ENCODE measurements at regions of chr4 and their contacts with region 1.

Region 1: DNA sequence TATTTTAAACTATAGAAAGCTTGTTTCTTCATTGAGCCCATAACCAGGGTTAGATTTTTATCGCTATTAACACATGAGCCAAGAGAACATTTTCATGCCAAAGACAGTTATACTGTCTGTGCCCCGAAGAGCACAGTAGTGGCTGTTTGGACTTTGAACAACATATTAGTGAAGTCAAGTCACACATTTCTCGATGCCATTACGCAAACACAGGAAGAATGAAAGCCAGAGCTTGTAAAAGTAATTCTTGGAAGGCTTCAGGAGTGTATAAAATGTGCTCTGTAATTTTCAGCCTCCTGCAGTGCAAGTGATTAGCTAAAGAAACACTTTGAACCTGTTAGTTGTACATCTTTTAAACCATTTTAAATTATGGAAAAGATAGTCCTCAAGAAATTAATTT is 590.7 kb upstream of the PITX2 start:
- DNase-seq: no peak
- H3K4me3 ChIP-seq: no peak overlapping the region
- H3K27ac ChIP-seq: no peak overlapping the region
- H3K4me1 ChIP-seq: no peaks in the 10 kb centered on the region
- H3K27me3 ChIP-seq: no peaks in the 10 kb centered on the region
- CTCF ChIP-seq: no peak
- EP300 ChIP-seq: no peak
- POLR2A ChIP-seq: no peak

Region 2: GRCh38 chr4:111450867-111451266 is 237.3 kb after region 1 on chr4:
- in situ Hi-C with region 1: no loop called
- intact Hi-C with region 1: no loop called
- DNase-seq: no peak
- H3K4me3 ChIP-seq: no peak overlapping the region
- H3K27ac ChIP-seq: no peak overlapping the region
- H3K4me1 ChIP-seq: peaks cover 0 to 15% (median 4%) of the 10 kb centered on the region in 4 donors
- H3K27me3 ChIP-seq: no peaks in the 10 kb centered on the region
- CTCF ChIP-seq: no peak
- EP300 ChIP-seq: no peak
- POLR2A ChIP-seq: no peak

Region 3: GRCh38 chr4:111466811-111467604 is 253.5 kb after region 1 on chr4:
- in situ Hi-C with region 1: no loop called
- intact Hi-C with region 1: loop called (anchors 10 kb)
- DNase-seq: no peak
- H3K4me3 ChIP-seq: no peak overlapping the region
- H3K27ac ChIP-seq: no peak overlapping the region
- H3K4me1 ChIP-seq: no peaks in the 10 kb centered on the region
- H3K27me3 ChIP-seq: no peaks in the 10 kb centered on the region
- CTCF ChIP-seq: no peak
- EP300 ChIP-seq: no peak
- POLR2A ChIP-seq: no peak